ENCODE measurements at regions of chr14 and their contacts with region 1.

Region 1: GRCh38 chr14:102524466-102525218 is 15.1 kb upstream of the ANKRD9 start:
- DNase-seq: peak; percentile 100
- H3K4me3 ChIP-seq: peak overlapping the region; percentile 47 to 73 (median 60)
- H3K27ac ChIP-seq: peak overlapping the region; percentile 80 to 89 (median 84)
- H3K4me1 ChIP-seq: peaks cover 0 to 15% (median 11%) of the 10 kb centered on the region in 4 donors
- H3K27me3 ChIP-seq: no peaks in the 10 kb centered on the region
- CTCF ChIP-seq: peak; percentile 95 to 99 (median 98)
- EP300 ChIP-seq: no peak
- POLR2A ChIP-seq: peak; percentile 7 to 52

Region 2: DNA sequence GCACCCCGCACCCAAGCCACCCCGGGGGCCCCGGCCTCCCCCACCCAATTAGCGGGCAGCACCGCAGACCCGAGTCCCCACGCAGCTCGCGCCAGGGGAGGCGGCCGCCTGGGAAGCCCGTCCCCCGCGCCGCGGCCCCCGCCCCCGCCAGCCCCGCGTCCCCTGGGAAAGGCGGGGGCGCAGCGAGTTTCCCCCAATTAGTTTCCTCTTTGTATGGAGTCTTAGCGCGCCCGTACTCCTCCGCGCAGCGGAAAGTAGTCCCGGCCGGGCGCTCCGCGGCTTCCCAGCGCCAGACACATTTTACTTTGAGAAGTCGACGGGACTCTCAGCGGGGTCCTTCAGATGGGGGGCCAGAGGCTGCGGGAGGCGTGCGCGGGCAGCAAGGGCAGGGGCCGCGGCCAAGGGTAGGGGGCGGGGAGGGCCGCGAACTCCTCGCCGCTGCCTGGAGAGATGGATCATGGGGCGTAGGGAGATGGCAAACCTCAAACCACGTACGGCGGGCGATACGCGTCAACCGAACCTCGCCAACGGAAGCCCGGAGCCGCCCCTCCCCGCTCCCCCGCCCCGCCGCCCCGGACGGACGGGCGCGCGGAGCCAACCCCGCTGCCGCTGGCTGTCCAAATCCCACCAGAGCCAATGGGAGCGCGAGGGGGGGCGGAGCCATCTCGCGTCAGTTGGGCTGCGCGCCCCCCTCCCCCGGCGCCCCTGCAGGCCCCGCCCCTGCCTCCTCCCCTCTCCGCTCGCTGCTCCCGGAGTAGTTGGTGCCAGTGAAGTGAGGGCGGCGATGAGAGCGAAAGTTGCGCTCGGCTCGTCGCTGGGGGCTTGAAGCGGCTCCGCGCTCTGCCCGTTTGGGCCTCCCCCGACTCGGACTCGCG is 67.5 kb after region 1 on chr14 and contains the start of gene RCOR1:
- intact Hi-C with region 1: loop called (anchors 2 kb)
- DNase-seq: peak; percentile 99
- H3K4me3 ChIP-seq: peak within 1 kb of the TSS; percentile 67 to 92 (median 86)
- H3K27ac ChIP-seq: peak within 1 kb of the TSS; percentile 88 to 99 (median 98)
- H3K4me1 ChIP-seq: peaks cover 0 to 32% (median 29%) of the 10 kb centered on the region in 4 donors
- H3K27me3 ChIP-seq: no peaks in the 10 kb centered on the region
- CTCF ChIP-seq: no peak
- EP300 ChIP-seq: no peak
- POLR2A ChIP-seq: peak; percentile 15 to 21
- total RNA-seq, gene RCOR1: 8.9 to 11.9 (median 11.8) TPM

Region 3: DNA sequence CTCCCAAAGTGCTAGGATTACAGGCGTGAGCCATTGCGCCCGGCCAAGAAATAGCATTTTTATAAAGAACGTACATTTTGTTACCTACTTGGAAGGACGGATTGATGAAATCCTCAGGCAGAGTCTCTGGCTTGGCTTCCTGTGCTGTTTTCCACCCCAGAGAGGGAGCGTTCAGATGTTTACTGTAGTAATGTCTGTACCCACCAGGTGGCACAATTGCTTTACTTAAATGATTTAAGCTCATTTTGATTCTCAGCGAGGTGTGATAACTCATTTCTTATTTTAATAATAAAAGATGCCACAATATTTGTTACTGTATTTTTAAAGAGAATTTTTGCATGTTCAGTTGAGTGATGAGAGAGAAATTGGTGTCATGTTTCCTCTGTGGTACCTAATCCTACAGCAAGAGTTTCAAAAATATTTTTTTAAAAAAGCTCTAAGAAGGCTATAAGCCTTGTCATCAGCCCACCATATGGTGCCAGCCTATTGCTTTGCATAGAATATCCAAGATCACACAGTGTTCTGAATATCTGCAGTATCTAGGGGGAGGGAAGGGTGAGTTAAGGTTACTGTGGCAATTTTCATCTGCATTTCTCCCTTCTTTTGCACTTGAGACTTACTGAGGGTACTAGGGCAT is 170.0 kb after region 1 on chr14:
- intact Hi-C with region 1: loop called (anchors 10 kb)
- DNase-seq: peak; percentile 79
- H3K4me3 ChIP-seq: no peak overlapping the region
- H3K27ac ChIP-seq: no peak overlapping the region
- H3K4me1 ChIP-seq: peaks cover 0 to 46% (median 22%) of the 10 kb centered on the region in 4 donors
- H3K27me3 ChIP-seq: no peaks in the 10 kb centered on the region
- CTCF ChIP-seq: peak; percentile 55 to 69 (median 60)
- EP300 ChIP-seq: no peak
- POLR2A ChIP-seq: no peak

Region 4: DNA sequence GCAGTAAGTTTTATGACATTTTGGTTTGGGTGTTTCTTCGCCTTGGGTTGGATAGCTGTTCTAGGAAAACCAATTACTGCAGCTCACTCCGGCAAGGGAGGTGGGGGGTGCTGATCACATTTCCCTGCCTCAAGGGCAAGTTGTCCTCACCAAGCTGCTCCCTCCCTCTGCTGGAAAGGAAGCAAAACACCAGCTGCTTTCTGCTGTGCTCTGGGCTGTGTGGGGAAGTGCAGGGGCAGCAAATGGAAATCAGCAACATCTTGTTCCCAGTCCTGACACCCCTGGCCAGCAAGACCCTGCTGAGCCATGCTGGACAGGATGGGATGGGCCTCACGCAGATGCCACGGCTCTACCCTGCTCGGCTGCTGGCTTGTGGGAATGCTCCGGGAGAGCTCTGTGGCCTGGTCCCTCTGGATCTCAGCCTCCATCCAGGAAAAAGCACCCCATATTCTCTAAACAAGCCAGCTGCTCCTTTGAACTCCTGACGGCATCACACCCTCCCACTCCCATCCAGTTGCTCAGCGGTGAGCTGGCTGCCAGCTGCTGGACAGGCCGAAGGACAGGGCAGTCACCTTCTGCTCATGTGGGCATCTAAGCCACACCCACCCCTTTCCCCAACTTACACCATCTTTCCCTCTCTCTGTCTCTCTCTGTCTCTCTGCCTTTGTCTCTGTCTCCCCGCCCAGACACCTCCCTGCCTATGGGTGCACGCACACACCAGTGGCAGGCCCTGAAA is 757.0 kb after region 1 on chr14:
- intact Hi-C with region 1: no loop called
- DNase-seq: peak; percentile 82
- H3K4me3 ChIP-seq: no peak overlapping the region
- H3K27ac ChIP-seq: no peak overlapping the region
- H3K4me1 ChIP-seq: peaks cover 0 to 18% (median 16%) of the 10 kb centered on the region in 4 donors
- H3K27me3 ChIP-seq: peaks cover 11 to 59% (median 37%) of the 10 kb centered on the region in 3 donors
- CTCF ChIP-seq: no peak
- EP300 ChIP-seq: no peak
- POLR2A ChIP-seq: no peak